SK-N-SH (cell line): ENCODE measurements at regions of chr2 and their contacts with region 1.

Region 1: DNA sequence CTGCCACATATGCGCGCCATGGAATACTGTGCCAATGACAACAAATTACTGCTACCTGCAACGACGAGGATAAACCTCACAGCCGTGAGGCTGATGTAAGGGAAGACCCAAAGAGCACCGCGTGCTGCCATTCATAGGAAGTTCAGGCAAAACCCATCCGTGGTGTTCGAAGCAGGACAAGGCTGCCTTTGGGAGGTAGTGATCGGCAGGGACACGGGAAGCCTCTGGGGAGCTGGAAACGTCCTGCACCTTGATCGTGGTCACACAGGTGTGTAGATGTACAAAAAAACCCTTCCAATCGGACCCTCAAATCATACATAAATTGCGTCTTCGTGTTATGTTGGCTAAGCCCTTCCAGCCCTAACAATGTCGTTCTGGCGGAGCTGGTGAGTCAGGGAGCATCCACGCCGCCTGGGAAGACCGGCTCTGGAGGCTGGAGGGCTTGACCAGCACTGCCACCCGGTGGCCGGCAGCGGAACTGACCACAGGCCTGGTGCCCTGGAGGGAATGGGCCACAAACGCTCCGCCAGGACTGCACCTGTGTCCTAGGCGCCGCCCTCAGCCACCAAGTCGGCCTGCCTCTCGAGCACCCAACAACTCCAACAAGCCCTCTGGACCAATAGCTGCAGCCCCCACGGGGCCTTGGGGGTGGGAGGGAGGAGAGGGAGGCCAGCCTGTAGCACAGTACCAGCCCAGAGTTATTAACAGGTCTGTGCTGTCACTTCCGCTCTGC is 4.1 kb upstream of the NEURL3 start:
- DNase-seq: peak; percentile 92
- H3K4me3 ChIP-seq: no peak overlapping the region; a peak in 1 of 4 replicates
- H3K27ac ChIP-seq: no peak overlapping the region
- H3K4me1 ChIP-seq: peaks cover 4 to 10% of the 10 kb centered on the region in 2 experiments; a peak in 1 of 4 replicates
- H3K27me3 ChIP-seq: peaks cover 16% of the 10 kb centered on the region; the same call in 1 of the 2 replicates
- CTCF ChIP-seq: peak; percentile 91
- EP300 ChIP-seq: no peak
- RAD21 ChIP-seq: peak; percentile 94

Region 2: DNA sequence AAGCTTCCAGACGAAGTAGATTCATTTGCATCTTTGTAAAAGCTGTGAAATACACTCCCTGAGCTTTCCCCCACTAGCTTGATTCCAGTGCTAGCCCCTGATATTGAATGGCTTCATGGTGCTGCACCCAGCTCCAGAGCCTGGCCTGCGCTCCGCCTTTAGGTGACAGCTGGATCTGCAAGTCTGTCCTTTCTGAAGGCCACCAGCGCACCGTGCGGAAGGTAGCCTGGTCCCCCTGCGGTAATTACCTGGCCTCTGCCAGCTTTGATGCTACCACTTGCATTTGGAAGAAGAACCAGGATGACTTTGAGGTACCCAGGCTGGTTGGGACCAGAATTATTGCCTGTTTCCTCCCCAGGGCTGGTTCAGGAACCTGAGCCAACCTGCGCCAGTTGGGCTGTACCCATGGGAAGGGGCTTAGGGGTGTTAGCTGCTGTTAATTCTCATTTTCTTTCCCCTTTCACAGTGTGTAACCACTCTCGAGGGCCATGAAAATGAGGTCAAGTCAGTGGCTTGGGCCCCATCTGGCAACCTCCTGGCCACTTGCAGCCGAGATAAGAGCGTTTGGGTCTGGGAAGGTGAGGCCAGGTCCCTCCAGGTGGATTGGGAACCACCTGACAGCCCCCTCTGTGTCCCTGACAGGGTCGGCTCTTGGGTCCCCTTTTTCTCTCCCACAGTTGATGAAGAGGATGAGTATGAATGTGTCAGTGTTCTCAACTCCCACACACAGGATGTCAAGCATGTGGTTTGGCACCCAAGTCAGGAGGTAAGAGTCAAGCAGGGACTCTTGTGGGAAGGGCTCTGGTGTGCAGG is 241.9 kb before region 1 on chr2:
- CTCF ChIA-PET with region 1: interaction called, 12 read pairs
- POLR2A ChIA-PET with region 1: no interaction called
- DNase-seq: peak; percentile 63
- H3K4me3 ChIP-seq: peak overlapping the region; percentile 73 to 96
- H3K27ac ChIP-seq: peak overlapping the region in 1 of 2 experiments; percentile 66; a peak in 1 of 4 replicates
- H3K4me1 ChIP-seq: peaks cover 10 to 22% of the 10 kb centered on the region in 2 experiments; a peak in 3 of 4 replicates
- H3K27me3 ChIP-seq: no peaks in the 10 kb centered on the region
- CTCF ChIP-seq: peak; percentile 59
- EP300 ChIP-seq: no peak
- RAD21 ChIP-seq: peak; percentile 49

Region 3: GRCh38 chr2:96407041-96407918 is 102.0 kb before region 1 on chr2:
- CTCF ChIA-PET with region 1: interaction called, 273 read pairs
- POLR2A ChIA-PET with region 1: interaction called, 3 read pairs
- DNase-seq: peak; percentile 79
- H3K4me3 ChIP-seq: peak overlapping the region in 1 of 2 experiments; percentile 34; a peak in 1 of 4 replicates
- H3K27ac ChIP-seq: no peak overlapping the region
- H3K4me1 ChIP-seq: peaks cover 0 to 10% of the 10 kb centered on the region in 2 experiments; a peak in 1 of 4 replicates
- H3K27me3 ChIP-seq: no peaks in the 10 kb centered on the region
- CTCF ChIP-seq: peak; percentile 80
- EP300 ChIP-seq: no peak
- RAD21 ChIP-seq: peak; percentile 75

Region 4: DNA sequence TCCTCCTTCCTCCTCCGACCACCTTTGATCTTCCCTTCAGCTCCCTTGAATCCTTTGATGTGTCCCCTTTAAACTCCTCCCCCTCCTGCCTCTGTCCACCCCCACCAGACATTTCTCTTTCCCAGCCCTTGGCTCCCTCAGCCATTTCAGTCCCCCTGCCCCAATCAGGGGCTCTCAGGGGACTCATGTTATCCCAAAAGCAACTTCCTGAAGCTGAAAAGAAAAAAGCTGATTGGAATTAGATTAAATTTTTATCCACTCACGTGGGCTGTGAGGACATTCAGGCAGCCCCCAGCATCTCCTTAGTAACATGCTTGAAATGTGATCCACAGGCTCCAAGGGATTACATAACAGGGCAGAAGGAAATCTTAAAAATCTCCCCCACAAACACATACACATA is 85.5 kb before region 1 on chr2:
- CTCF ChIA-PET with region 1: interaction called, 12 read pairs
- POLR2A ChIA-PET with region 1: no interaction called
- DNase-seq: no peak
- H3K4me3 ChIP-seq: no peak overlapping the region
- H3K27ac ChIP-seq: no peak overlapping the region
- H3K4me1 ChIP-seq: peaks cover 0 to 4% of the 10 kb centered on the region in 2 experiments; a peak in 1 of 4 replicates
- H3K27me3 ChIP-seq: no peaks in the 10 kb centered on the region; the same call in 1 of the 2 replicates
- CTCF ChIP-seq: no peak
- EP300 ChIP-seq: no peak
- RAD21 ChIP-seq: no peak

Region 5: GRCh38 chr2:96495982-96496629 is 13.2 kb before region 1 on chr2:
- CTCF ChIA-PET with region 1: interaction called, 17 read pairs
- POLR2A ChIA-PET with region 1: no interaction called
- DNase-seq: no peak
- H3K4me3 ChIP-seq: no peak overlapping the region
- H3K27ac ChIP-seq: no peak overlapping the region
- H3K4me1 ChIP-seq: no peaks in the 10 kb centered on the region; a peak in 1 of 4 replicates
- H3K27me3 ChIP-seq: peaks cover 47% of the 10 kb centered on the region
- CTCF ChIP-seq: no peak
- EP300 ChIP-seq: no peak
- RAD21 ChIP-seq: no peak

Region 6: GRCh38 chr2:96536445-96537065 is 27.3 kb after region 1 on chr2 and contains the start of gene ARID5A:
- CTCF ChIA-PET with region 1: interaction called, 34 read pairs
- POLR2A ChIA-PET with region 1: no interaction called
- DNase-seq: peak; percentile 98
- H3K4me3 ChIP-seq: peak within 1 kb of the TSS; percentile 69 to 79
- H3K27ac ChIP-seq: peak within 1 kb of the TSS in 1 of 2 experiments; percentile 46; a peak in 1 of 4 replicates
- H3K4me1 ChIP-seq: peaks cover 28 to 46% of the 10 kb centered on the region in 2 experiments
- H3K27me3 ChIP-seq: no peaks in the 10 kb centered on the region
- CTCF ChIP-seq: no peak
- EP300 ChIP-seq: no peak
- RAD21 ChIP-seq: no peak
- polyA plus RNA-seq, gene ARID5A: 3.3 TPM in 2 replicates

Region 7: DNA sequence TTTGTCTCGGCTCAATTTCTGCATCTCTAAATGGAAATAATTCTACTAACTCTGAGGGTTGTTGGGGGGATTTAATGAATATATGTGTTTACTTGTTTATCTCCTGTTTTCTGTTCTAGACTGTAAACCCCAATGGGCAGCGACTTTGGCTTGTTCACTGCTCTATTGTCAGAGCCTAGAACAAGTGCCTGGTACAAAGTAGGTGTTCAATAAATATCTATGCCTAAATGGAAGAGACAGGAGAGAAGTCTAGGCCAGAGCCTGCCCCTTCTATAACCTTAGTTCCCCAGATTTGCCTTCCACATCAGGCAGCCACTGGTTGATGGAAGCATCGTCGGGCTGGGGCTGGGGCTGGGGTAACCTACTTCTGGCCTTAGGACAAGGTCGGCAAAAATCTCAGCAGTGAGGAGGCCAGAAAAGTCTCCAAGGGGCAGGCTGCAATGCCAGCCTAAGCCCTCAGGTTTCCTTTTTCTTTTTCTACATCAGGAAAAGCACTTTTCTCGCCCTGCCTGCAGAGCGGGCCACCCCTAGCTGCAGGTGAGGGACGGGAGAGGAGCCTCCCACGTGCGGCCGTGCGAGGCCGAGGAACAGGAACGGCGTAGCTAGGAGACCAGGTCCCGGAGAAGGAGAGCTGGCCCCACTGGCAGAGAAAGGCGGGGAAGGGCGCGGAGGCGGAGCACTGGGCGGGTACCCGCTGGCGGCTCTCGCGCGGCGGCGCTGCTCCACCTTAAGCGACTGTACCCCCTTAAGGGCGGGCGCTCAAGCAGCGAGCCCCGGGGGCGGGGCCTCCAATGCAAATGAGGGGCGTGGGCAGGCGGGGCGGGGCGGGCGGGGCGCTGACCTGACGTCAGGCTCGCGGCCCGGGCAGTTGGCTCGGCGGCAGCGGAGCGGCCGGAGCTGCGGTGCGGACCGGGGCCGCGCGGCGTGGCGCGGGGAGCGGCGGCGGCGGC is 251.0 kb after region 1 on chr2 and contains the start of gene CNNM4:
- CTCF ChIA-PET with region 1: no interaction called
- POLR2A ChIA-PET with region 1: no interaction called
- DNase-seq: peak; percentile 97
- H3K4me3 ChIP-seq: peak within 1 kb of the TSS; percentile 61 to 74
- H3K27ac ChIP-seq: peak within 1 kb of the TSS; percentile 48 to 75; a peak in 3 of 4 replicates
- H3K4me1 ChIP-seq: peaks cover 16 to 38% of the 10 kb centered on the region in 2 experiments; a peak in 2 of 4 replicates
- H3K27me3 ChIP-seq: no peaks in the 10 kb centered on the region
- CTCF ChIP-seq: no peak
- EP300 ChIP-seq: no peak
- RAD21 ChIP-seq: no peak
- polyA plus RNA-seq, gene CNNM4: 5.5 TPM in 2 replicates

Region 8: GRCh38 chr2:96816836-96817702 is 307.8 kb after region 1 on chr2:
- CTCF ChIA-PET with region 1: no interaction called
- POLR2A ChIA-PET with region 1: no interaction called
- DNase-seq: peak; percentile 51
- H3K4me3 ChIP-seq: peak overlapping the region; percentile 61 to 73
- H3K27ac ChIP-seq: peak overlapping the region in 1 of 2 experiments; percentile 91; a peak in 2 of 4 replicates
- H3K4me1 ChIP-seq: peaks cover 5 to 40% of the 10 kb centered on the region in 2 experiments; a peak in 3 of 4 replicates
- H3K27me3 ChIP-seq: no peaks in the 10 kb centered on the region
- CTCF ChIP-seq: no peak
- EP300 ChIP-seq: no peak
- RAD21 ChIP-seq: no peak